ENCODE measurements at regions of chr2 and their contacts with region 1.

Region 1: GRCh38 chr2:192687015-192687414 is 492.3 kb upstream of the TMEFF2 start:
- DNase-seq: no peak
- ATAC-seq: no peak
- H3K4me3 ChIP-seq: no peak overlapping the region
- H3K27ac ChIP-seq: no peak overlapping the region
- H3K4me1 ChIP-seq: no peaks in the 10 kb centered on the region
- H3K27me3 ChIP-seq: no peaks in the 10 kb centered on the region
- CTCF ChIP-seq: no peak

Region 2: GRCh38 chr2:191593622-191594416 is 1093.2 kb before region 1 on chr2:
- intact Hi-C with region 1: loop called in 1 of 2 experiments (anchors 5 kb)
- DNase-seq: no peak
- ATAC-seq: no peak
- H3K4me3 ChIP-seq: no peak overlapping the region
- H3K27ac ChIP-seq: no peak overlapping the region
- H3K4me1 ChIP-seq: no peaks in the 10 kb centered on the region
- H3K27me3 ChIP-seq: no peaks in the 10 kb centered on the region
- CTCF ChIP-seq: no peak

Measured in psoas muscle (tissue), 8 donors.